B cell (primary cell): ENCODE measurements at regions of chr3 and their contacts with region 1.

Region 1: DNA sequence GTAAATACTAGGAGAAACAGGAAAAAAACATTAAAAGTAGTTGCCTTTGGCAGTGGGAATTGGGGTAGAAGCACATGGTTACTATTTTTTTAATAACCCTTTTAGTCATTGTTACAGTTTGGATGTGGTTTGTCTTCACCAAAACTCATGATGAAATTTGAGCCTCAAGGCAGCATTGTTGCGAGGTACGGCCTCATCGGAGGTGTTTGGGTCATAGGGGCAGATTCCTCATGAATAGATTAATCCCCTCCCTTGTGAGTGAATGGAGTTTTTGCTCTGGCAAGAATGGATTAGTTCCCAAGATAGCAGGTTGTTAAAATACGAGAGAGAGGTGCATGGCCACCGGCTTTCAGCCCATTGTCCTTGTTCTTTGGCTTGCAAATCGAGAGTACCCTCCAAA is 92.6 kb downstream of the LEKR1 start:
- DNase-seq: no peak
- ATAC-seq: no peak
- H3K4me3 ChIP-seq: no peak overlapping the region
- H3K4me3 Mint-ChIP-seq: no peak overlapping the region
- H3K27ac ChIP-seq: no peak overlapping the region
- H3K27ac Mint-ChIP-seq: no peak overlapping the region
- H3K4me1 ChIP-seq: no peaks in the 10 kb centered on the region
- H3K4me1 Mint-ChIP-seq: no peaks in the 10 kb centered on the region
- H3K27me3 ChIP-seq: no peaks in the 10 kb centered on the region
- H3K27me3 Mint-ChIP-seq: no peaks in the 10 kb centered on the region
- CTCF ChIP-seq: no peak

Region 2: DNA sequence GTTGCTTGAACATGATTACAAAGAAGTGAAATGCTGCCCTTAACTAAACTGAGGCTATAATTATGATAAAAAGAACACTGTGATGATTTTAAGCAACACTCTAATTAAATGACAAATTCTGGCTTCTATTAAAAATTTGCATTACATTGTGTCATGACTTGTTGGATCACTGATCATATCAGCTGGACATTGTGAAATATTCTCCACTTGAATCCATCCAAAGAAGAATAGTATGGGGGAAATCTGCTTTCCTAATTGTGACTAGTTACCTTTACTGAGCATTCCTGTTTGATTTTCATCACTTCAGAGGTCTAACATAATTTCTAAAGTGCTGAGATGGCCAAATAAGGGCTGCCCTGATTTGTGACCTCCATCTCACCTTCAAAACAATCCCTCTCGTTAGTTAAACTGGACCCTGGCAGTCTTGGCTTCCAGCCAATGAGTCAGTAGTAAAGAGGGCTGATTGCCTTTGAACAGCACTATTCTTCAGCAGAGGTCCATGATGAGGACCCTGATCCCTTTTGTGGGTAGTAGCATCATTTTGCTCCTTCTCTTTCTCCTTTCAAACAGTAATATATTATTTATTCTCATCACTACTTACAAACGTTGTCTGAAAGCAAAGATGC is 146.1 kb before region 1 on chr3:
- CTCF ChIA-PET with region 1: no interaction called
- POLR2A ChIA-PET with region 1: no interaction called
- intact Hi-C with region 1: no loop called
- DNase-seq: no peak
- ATAC-seq: no peak
- H3K4me3 ChIP-seq: no peak overlapping the region
- H3K4me3 Mint-ChIP-seq: no peak overlapping the region
- H3K27ac ChIP-seq: no peak overlapping the region
- H3K27ac Mint-ChIP-seq: no peak overlapping the region
- H3K4me1 ChIP-seq: no peaks in the 10 kb centered on the region
- H3K4me1 Mint-ChIP-seq: no peaks in the 10 kb centered on the region
- H3K27me3 ChIP-seq: no peaks in the 10 kb centered on the region
- H3K27me3 Mint-ChIP-seq: no peaks in the 10 kb centered on the region
- CTCF ChIP-seq: no peak

Region 3: GRCh38 chr3:156865732-156866131 is 53.0 kb before region 1 on chr3:
- CTCF ChIA-PET with region 1: no interaction called
- POLR2A ChIA-PET with region 1: no interaction called
- intact Hi-C with region 1: loop called (anchors 10 kb)
- DNase-seq: no peak
- ATAC-seq: no peak
- H3K4me3 ChIP-seq: no peak overlapping the region
- H3K4me3 Mint-ChIP-seq: no peak overlapping the region
- H3K27ac ChIP-seq: no peak overlapping the region
- H3K27ac Mint-ChIP-seq: no peak overlapping the region
- H3K4me1 ChIP-seq: no peaks in the 10 kb centered on the region
- H3K4me1 Mint-ChIP-seq: no peaks in the 10 kb centered on the region
- H3K27me3 ChIP-seq: no peaks in the 10 kb centered on the region
- H3K27me3 Mint-ChIP-seq: no peaks in the 10 kb centered on the region
- CTCF ChIP-seq: no peak